Activated B cell treated with CpG ODN at 0.5 μM for 24 hours (primary cell): ENCODE measurements at regions of chr9 and their contacts with region 1.

Region 1: GRCh38 chr9:128249908-128250838 is 25.6 kb downstream of the GOLGA2 start:
- DNase-seq: peak; percentile 99
- ATAC-seq: peak; percentile 98
- H3K4me3 Mint-ChIP-seq: peak overlapping the region; percentile 83
- H3K27ac Mint-ChIP-seq: peak overlapping the region; percentile 79
- H3K4me1 Mint-ChIP-seq: peaks cover 29% of the 10 kb centered on the region
- H3K27me3 Mint-ChIP-seq: peaks cover 1% of the 10 kb centered on the region
- CTCF ChIP-seq: no peak

Region 2: GRCh38 chr9:128007566-128008138 is 242.5 kb before region 1 on chr9:
- CTCF ChIA-PET with region 1: no interaction called
- POLR2A ChIA-PET with region 1: no interaction called
- intact Hi-C with region 1: no loop called
- DNase-seq: peak; percentile 51
- ATAC-seq: peak; percentile 78
- H3K4me3 Mint-ChIP-seq: peak overlapping the region; percentile 49
- H3K27ac Mint-ChIP-seq: peak overlapping the region; percentile 94
- H3K4me1 Mint-ChIP-seq: peaks cover 72% of the 10 kb centered on the region
- H3K27me3 Mint-ChIP-seq: no peaks in the 10 kb centered on the region
- CTCF ChIP-seq: no peak

Region 3: DNA sequence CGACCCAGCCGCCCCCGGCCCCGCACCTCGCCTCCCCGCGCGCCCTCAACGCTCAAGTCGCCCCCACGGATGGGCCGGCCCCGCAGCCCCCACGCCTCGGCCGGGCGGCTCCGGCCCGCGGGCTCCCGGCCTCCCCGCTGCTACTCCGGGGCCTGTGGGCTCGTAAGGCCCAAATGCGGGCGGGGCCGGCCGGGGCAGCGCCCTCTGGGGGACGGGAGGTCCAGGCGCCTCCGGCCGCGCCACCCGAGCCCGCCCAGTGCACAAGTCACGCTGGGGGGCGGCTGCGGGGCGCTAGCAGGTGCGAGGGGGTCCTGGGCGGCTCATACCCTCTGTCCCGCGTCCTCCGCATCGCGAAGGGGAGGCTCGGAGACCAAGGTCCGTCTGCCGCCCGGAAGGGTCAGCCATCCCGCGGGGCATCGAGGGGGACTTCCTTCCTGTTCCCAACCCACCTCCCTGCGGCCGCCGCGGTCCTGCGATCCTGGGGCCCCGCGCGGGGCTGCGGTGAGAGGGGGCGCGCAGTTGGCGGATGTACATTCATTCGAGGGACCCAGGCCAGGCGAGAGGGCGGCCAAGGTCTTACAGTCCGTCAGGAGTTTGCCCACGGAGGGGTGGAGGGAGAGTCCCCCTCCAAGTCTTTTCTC is 58.6 kb before region 1 on chr9 and contains the start of gene CIZ1:
- CTCF ChIA-PET with region 1: no interaction called
- POLR2A ChIA-PET with region 1: interaction called, 4 read pairs
- intact Hi-C with region 1: loop called (anchors 2 kb)
- DNase-seq: peak; percentile 85
- ATAC-seq: peak; percentile 89
- H3K4me3 Mint-ChIP-seq: peak within 1 kb of the TSS; percentile 94
- H3K27ac Mint-ChIP-seq: peak within 1 kb of the TSS; percentile 92
- H3K4me1 Mint-ChIP-seq: peaks cover 25% of the 10 kb centered on the region
- H3K27me3 Mint-ChIP-seq: no peaks in the 10 kb centered on the region
- CTCF ChIP-seq: no peak
- total RNA-seq, gene CIZ1: 142 and 160 TPM in 2 replicates

Region 4: GRCh38 chr9:128218518-128219389 is 31.4 kb before region 1 on chr9:
- CTCF ChIA-PET with region 1: no interaction called
- POLR2A ChIA-PET with region 1: no interaction called
- intact Hi-C with region 1: loop called (anchors 1 kb)
- DNase-seq: peak; percentile 87
- ATAC-seq: peak; percentile 97
- H3K4me3 Mint-ChIP-seq: peak overlapping the region; percentile 81
- H3K27ac Mint-ChIP-seq: peak overlapping the region; percentile 19
- H3K4me1 Mint-ChIP-seq: peaks cover 11% of the 10 kb centered on the region
- H3K27me3 Mint-ChIP-seq: peaks cover 5% of the 10 kb centered on the region
- CTCF ChIP-seq: no peak

Region 5: DNA sequence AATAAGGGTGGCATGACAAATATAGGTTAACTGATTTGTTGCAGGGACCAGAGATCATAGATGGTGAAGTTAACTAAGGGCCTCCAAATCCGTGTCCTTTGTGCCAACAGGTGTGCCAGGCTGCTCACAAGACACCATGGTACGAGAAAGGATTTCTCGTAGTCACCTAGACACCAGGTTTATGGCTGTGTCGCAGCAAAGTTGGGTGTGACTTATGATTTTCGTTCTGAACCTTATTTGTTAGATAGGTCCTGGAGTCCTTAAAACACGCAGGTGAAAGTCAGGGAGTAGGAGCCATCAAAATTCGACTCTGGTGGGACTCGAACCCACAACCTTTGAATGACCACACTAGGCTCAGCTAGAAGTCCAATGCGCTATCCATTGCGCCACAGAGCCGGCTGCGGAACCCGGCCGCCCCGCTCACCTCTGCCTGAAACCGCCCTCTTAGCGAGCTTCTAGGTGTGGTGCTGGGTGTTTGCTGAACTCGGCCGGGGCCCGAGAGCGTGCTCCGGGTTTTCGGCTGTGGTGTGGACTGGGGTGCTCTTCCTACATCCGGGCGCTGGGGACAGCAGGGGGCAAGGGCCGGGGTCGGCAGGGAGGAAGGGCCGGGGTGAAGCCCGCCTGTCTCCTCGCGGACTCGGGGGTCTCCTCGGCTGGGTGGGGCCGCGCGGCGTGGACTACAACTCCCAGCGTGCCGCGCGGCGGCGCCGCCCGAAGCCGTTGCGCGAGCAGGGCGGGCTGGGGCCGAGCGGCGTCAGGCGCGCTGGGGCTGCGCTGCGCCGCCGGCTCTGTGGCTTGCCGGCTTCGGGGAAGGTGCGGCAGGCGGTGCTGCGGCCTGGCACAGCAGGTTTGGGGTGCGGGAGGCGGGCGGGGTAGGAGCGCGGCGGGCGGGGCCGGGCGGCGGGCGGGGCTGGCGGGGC is 89.9 kb after region 1 on chr9 and contains the start of gene SLC27A4:
- CTCF ChIA-PET with region 1: interaction called, 5 read pairs
- POLR2A ChIA-PET with region 1: no interaction called
- intact Hi-C with region 1: loop called (anchors 1 kb)
- DNase-seq: peak; percentile 81
- ATAC-seq: peak; percentile 91
- H3K4me3 Mint-ChIP-seq: peak within 1 kb of the TSS; percentile 86
- H3K27ac Mint-ChIP-seq: peak within 1 kb of the TSS; percentile 80
- H3K4me1 Mint-ChIP-seq: peaks cover 10% of the 10 kb centered on the region
- H3K27me3 Mint-ChIP-seq: no peaks in the 10 kb centered on the region
- CTCF ChIP-seq: no peak
- total RNA-seq, gene SLC27A4: 13.6 and 14.4 TPM in 2 replicates

Region 6: GRCh38 chr9:128455849-128456612 is 205.9 kb after region 1 on chr9 and contains the start of gene ODF2:
- CTCF ChIA-PET with region 1: no interaction called
- POLR2A ChIA-PET with region 1: no interaction called
- intact Hi-C with region 1: loop called (anchors 1 kb)
- DNase-seq: peak; percentile 99
- ATAC-seq: peak; percentile 88
- H3K4me3 Mint-ChIP-seq: peak within 1 kb of the TSS; percentile 88
- H3K27ac Mint-ChIP-seq: peak within 1 kb of the TSS; percentile 83
- H3K4me1 Mint-ChIP-seq: peaks cover 14% of the 10 kb centered on the region
- H3K27me3 Mint-ChIP-seq: no peaks in the 10 kb centered on the region
- CTCF ChIP-seq: no peak
- total RNA-seq, gene ODF2: 41.2 and 45.7 TPM in 2 replicates

Region 7: DNA sequence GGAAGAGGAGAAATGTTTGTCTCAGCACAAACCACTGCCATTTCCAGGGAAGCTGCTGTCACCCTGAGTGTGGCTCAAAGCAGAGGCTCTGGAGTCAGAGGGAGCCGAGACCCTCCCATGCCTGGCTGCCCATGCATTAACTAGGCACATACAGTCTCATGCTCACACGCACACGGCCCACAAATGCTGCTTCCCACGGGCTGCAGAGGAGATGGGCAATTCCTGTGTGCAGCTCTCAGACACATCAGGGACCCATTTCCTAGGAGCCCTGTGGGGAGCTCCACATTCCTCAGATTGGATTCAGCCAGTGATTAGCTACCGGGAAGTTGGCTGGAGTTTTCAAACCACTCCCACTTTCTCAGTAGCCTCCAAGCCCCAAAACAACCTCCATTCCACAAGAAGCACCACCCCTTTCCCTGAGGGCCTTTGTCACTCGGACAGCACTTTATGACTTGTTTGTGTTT is 1511.8 kb after region 1 on chr9:
- CTCF ChIA-PET with region 1: no interaction called
- POLR2A ChIA-PET with region 1: no interaction called
- intact Hi-C with region 1: no loop called
- DNase-seq: no peak
- ATAC-seq: no peak
- H3K4me3 Mint-ChIP-seq: no peak overlapping the region
- H3K27ac Mint-ChIP-seq: no peak overlapping the region
- H3K4me1 Mint-ChIP-seq: peaks cover 10% of the 10 kb centered on the region
- H3K27me3 Mint-ChIP-seq: peaks cover 16% of the 10 kb centered on the region
- CTCF ChIP-seq: no peak